BJ (cell line): ENCODE measurements at regions of chr15 and their contacts with region 1.

Region 1: DNA sequence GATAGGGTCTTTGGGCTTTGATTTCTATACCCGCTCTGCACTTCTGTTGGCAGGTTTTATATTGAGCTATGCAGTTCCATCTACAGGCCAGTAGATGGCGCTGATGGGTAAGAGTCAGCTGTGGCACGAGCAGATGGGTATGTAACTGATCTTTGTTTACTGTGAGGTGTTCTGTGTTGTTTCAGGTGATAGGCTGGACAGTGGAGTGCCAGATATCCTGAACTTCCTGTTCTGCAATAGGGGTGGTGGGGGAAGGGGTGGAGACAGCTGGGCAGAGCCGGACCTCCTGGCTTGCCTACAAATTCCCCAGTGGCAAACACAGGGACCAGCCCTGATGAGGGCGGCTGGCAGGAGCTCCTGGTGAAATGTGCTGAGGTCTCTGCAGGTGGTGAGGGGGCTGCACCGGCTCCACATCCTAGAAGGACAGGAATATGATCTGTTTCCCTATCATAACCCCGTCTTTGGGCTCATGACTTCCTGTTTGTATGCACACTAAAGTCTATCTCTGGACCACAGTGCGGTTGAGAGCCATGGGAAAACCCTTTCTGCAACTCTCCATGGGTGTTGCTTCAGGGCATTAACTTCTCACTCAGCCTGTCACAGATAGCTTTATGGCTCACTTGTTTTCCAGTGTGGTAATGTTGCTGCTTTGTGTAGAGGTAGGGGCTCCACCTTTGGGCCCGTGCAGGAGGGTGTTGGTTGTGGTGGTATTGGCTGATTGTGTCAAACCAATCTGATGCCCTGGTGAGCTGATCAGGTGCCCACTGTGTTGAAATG is 13.4 kb upstream of the FAM98B start:
- DNase-seq: no peak
- H3K4me3 ChIP-seq: no peak overlapping the region
- H3K27me3 ChIP-seq: peaks cover 8% of the 10 kb centered on the region
- CTCF ChIP-seq: peak; percentile 92

Region 2: DNA sequence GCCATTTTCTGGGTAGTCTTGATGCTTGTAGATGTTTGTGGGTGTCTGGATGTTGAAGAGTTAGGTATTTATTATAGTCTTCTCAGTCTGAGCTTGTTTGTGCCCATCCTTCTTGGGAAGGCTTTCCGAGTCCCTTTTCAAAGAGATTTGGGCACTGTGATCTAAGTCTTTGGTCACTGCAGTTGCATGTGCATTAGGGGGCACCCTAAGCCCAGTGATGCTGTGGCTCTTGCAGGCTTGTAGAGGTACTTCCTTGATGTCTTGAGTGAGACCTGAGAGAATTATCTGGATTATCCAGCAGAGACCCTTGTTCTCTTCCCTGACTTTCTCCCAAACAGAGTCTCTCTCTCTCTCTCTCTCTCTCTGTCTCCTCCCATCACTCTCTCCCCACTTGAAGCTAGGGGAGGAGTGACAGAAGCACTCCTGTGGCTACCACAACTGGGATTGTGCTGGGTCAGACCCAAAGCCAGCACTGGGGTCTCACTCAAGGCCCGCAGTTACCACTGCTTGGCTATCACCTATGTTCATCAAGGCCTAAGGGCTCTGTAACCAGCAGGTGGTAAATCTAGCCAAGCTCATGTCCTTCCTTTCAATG is 437.6 kb before region 1 on chr15:
- CTCF ChIA-PET with region 1: interaction called, 10 read pairs
- POLR2A ChIA-PET with region 1: no interaction called
- DNase-seq: no peak
- H3K4me3 ChIP-seq: no peak overlapping the region
- H3K27me3 ChIP-seq: no peaks in the 10 kb centered on the region
- CTCF ChIP-seq: peak; percentile 73

Region 3: GRCh38 chr15:38242055-38242454 is 198.5 kb before region 1 on chr15:
- CTCF ChIA-PET with region 1: no interaction called
- POLR2A ChIA-PET with region 1: no interaction called
- DNase-seq: no peak
- H3K4me3 ChIP-seq: no peak overlapping the region
- H3K27me3 ChIP-seq: no peaks in the 10 kb centered on the region
- CTCF ChIP-seq: no peak

Region 4: GRCh38 chr15:38453971-38454695 is 13.6 kb after region 1 on chr15 and contains the start of gene FAM98B:
- CTCF ChIA-PET with region 1: interaction called, 36 read pairs
- POLR2A ChIA-PET with region 1: no interaction called
- DNase-seq: peak; percentile 36
- H3K4me3 ChIP-seq: peak within 1 kb of the TSS; percentile 84
- H3K27me3 ChIP-seq: 0 out of 2 replicates have a peak, but pooled peaks cover 2% of the 10 kb centered on the region
- CTCF ChIP-seq: peak; percentile 14; the same call in 1 of the 2 replicates
- polyA plus RNA-seq, gene FAM98B: 4.9 and 8.1 TPM in 2 replicates

Region 5: GRCh38 chr15:38683382-38684242 is 243.1 kb after region 1 on chr15:
- CTCF ChIA-PET with region 1: interaction called, 90 read pairs
- POLR2A ChIA-PET with region 1: interaction called, 3 read pairs
- DNase-seq: no peak
- H3K4me3 ChIP-seq: no peak overlapping the region
- H3K27me3 ChIP-seq: no peaks in the 10 kb centered on the region
- CTCF ChIP-seq: peak; percentile 78

Region 6: GRCh38 chr15:38699633-38700230 is 259.2 kb after region 1 on chr15:
- CTCF ChIA-PET with region 1: interaction called, 49 read pairs
- POLR2A ChIA-PET with region 1: no interaction called
- DNase-seq: no peak
- H3K4me3 ChIP-seq: no peak overlapping the region
- H3K27me3 ChIP-seq: no peaks in the 10 kb centered on the region
- CTCF ChIP-seq: peak; percentile 90